ENCODE measurements at regions of chr7 and their contacts with region 1.

Region 1: DNA sequence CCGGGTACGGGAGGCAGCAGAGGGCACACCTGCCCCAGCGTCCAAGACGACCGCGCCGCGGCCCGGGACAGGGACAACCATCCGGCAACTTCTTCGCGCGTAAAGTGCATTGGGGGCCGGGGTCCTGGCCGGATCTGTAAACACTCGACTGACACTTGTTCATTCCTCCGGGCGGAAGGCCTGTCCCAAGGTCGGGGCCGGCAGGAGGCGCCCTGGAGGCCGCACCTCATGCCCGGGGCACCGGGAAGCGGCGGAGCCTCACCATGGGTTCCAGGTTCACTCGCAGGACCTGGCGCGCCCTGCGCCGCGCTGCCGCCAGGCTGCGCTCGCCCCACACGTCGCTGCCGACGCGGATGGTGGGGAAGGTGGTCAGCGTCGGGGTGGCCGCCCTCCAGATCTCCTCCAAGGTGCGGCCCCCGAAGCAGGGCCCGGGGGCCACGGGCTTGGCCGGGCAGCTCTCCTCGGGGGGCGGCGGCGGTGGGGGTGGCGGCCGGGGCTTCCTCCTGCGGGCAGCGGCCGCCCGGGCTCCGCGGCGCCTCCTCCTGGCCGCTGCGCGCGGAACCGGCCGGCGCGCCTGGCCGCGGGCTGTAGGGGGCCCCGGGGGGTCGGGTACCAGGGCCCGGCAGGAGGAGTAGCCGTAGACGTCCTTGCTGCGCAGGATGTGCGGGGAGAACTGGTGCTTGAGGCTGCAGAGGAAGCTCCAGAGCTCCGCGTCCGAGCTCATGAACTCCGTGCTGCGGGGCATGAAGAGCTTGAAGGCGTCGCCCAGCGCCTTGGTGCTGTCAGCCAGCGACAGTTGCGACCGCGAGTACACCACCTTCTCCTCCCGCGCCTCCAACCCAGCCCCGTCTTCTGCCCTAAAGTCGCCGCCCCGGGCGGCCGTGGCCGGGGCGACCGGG is 746 bp downstream of the CCDC71L start:
- DNase-seq: peak; percentile 92
- ATAC-seq: peak; percentile 72
- H3K4me3 Mint-ChIP-seq: peak overlapping the region; percentile 86
- H3K27ac Mint-ChIP-seq: peak overlapping the region; percentile 94
- H3K4me1 Mint-ChIP-seq: peaks cover 31% of the 10 kb centered on the region
- H3K27me3 Mint-ChIP-seq: no peaks in the 10 kb centered on the region

Region 2: DNA sequence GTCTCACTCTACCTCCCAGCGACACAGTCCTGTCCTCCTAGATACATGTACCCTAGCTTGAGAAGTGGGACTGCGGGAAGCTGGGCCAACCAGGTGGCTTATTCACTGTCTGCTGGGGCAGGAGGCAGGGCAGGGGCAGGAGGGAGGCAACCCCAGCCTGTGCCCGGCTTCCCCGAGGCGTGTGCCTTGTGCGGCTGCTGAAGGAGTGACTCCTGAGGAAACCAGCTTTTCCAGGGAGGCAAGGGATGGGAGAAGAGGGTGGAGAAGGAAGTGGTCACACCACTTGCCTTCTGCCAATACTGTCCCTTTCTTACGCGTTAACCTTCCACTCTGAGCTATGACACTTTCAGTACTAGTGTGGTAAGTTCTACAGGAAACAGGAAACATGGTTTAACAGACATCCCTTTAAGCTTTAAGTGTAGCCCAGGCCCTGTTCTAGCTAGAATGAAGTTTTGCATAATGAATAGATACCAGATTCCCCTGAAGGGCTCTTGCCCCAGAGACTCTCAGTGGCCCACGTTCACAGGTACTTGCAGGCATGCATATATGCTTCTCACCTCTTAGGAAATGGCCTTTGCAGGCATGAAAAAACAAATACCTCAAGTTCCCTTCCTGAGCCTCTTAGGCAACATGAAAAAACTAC is 588.7 kb before region 1 on chr7:
- CTCF ChIA-PET with region 1: no interaction called
- POLR2A ChIA-PET with region 1: no interaction called
- intact Hi-C with region 1: no loop called
- DNase-seq: peak; percentile 71
- ATAC-seq: peak; percentile 98
- H3K4me3 Mint-ChIP-seq: peak overlapping the region; percentile 60
- H3K27ac Mint-ChIP-seq: peak overlapping the region; percentile 95
- H3K4me1 Mint-ChIP-seq: peaks cover 35% of the 10 kb centered on the region
- H3K27me3 Mint-ChIP-seq: no peaks in the 10 kb centered on the region

Region 3: DNA sequence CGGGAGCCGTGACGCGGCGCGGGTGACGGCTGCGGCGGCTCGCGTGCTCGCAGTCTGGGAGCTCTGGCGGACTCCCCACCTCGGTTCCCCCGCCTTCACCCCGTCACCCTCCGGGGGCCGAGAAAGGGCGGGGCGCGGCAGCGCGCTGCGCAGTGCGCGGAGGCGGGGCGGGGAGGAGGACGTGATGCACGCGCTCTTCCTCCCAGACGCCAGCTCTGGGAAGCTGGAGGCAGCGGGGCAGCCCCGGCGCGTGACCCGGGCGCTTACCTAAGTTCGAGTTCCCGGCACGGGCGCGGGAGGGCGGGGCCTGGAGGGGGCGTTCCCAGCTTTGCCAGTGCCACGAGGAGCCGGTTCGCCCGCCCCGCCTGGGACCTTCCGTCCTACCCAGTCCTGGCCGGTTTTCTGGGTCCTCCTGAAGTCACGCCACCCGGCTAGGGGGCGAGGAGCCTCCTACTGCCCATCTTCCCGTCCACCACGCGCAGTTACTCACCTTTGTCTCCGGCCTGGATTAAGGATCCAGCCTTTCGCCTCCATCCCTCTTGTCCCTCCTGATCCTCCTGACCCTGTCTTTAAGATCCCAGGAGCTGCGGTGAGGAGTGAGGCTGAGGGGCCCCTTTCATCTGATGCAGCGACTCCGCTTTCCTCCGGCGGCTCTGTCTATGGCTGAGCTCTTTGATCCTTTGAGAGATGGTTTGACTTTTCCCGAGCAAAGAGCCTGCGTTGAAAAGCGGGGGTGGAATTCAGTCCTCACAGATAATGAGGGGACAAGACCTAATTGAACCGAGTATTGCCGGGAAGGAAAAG is 375.0 kb before region 1 on chr7:
- CTCF ChIA-PET with region 1: no interaction called
- POLR2A ChIA-PET with region 1: interaction called, 3 read pairs
- intact Hi-C with region 1: loop called (anchors 2 kb)
- DNase-seq: peak; percentile 100
- ATAC-seq: peak; percentile 80
- H3K4me3 Mint-ChIP-seq: peak overlapping the region; percentile 94
- H3K27ac Mint-ChIP-seq: peak overlapping the region; percentile 99
- H3K4me1 Mint-ChIP-seq: peaks cover 45% of the 10 kb centered on the region
- H3K27me3 Mint-ChIP-seq: no peaks in the 10 kb centered on the region

Region 4: GRCh38 chr7:106313456-106313901 is 346.7 kb before region 1 on chr7:
- CTCF ChIA-PET with region 1: no interaction called
- POLR2A ChIA-PET with region 1: no interaction called
- intact Hi-C with region 1: no loop called
- DNase-seq: no peak
- ATAC-seq: no peak
- H3K4me3 Mint-ChIP-seq: no peak overlapping the region
- H3K27ac Mint-ChIP-seq: no peak overlapping the region
- H3K4me1 Mint-ChIP-seq: peaks cover 28% of the 10 kb centered on the region
- H3K27me3 Mint-ChIP-seq: peaks cover 29% of the 10 kb centered on the region

Region 5: DNA sequence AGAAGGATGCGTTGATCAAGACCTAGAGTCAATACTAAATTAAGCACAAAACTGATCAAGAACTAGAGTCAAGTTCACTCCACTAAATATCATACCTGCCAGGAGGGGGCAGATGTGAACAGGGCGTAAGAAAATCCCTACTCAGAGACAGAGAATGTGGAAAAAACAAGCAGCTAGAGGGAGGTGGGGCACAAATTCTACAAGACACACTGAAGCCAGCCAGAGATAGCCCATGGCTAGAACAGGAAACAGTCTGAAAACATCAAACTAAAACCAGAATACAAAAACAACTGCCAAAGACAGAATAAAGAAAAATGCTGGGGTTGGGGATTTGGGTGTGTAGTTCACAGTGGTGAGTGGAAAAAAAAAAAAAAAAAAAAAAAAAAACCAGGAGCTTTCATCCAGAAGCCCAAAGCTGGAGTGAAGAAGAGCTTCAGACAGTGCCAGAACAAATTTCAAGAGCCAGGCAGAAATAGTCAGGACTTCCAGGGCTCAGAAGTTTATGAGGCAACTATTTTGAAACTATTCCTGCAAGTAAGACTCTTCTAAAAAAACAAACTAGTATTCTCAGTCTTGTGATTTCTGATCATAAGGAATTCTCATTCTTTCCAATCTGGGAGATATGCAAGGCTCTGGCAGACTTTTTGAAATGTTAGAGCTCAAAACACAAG is 117.5 kb before region 1 on chr7:
- CTCF ChIA-PET with region 1: interaction called, 14 read pairs
- POLR2A ChIA-PET with region 1: no interaction called
- intact Hi-C with region 1: loop called (anchors 1 kb)
- DNase-seq: peak; percentile 70
- ATAC-seq: peak; percentile 91
- H3K4me3 Mint-ChIP-seq: no peak overlapping the region
- H3K27ac Mint-ChIP-seq: peak overlapping the region; percentile 4
- H3K4me1 Mint-ChIP-seq: peaks cover 8% of the 10 kb centered on the region
- H3K27me3 Mint-ChIP-seq: peaks cover 3% of the 10 kb centered on the region

Region 6: GRCh38 chr7:106731187-106731586 is 71.0 kb after region 1 on chr7:
- CTCF ChIA-PET with region 1: interaction called, 92 read pairs
- POLR2A ChIA-PET with region 1: no interaction called
- intact Hi-C with region 1: loop called (anchors 1 kb)
- DNase-seq: no peak
- ATAC-seq: no peak
- H3K4me3 Mint-ChIP-seq: no peak overlapping the region
- H3K27ac Mint-ChIP-seq: no peak overlapping the region
- H3K4me1 Mint-ChIP-seq: peaks cover 47% of the 10 kb centered on the region
- H3K27me3 Mint-ChIP-seq: no peaks in the 10 kb centered on the region

Region 7: DNA sequence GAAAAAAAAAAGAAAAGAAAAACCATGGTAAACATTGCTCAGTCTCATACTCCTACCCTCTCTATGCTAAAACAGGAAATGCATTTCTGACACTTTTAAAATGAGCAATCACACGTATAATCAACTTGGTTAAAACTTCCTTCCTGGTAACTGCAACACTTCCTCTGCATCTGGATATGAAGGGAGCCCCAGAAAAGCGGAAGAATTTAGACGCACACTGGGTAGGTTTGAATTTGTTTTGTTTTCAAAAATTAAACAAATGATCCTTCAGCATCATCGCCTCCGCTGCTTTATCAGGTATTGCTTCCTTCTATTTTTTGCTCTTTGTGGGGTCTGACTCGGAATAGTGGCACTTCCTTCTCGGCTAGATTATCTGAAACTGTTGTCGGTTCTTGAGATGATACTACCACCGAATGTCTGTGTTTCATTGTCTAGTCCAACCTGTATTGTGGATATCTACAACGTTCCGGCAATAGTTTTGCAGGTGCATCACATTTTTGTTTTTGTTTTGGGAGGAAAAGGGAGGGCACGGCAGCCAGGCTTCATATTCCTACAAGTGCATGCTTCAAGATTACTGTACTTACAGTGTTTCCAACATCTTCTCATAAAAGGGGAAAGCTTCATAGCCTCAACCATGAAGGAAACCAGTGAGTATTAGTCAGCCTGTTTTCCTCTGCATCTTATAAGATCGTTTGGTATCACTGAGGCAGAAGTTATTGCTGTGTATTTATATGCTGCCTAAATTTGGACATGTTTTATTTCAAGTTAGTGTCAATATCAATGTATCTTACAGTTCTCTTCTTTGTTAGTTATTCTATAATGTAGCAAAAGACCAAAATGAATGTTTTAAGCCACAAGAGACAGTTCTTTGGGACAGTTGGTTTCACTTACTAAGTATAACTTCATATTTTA is 205.2 kb after region 1 on chr7 and contains the start of gene PIK3CG:
- CTCF ChIA-PET with region 1: interaction called, 3 read pairs
- POLR2A ChIA-PET with region 1: no interaction called
- intact Hi-C with region 1: loop called (anchors 5 to 10 kb)
- DNase-seq: no peak
- ATAC-seq: peak; percentile 79
- H3K4me3 Mint-ChIP-seq: peak within 1 kb of the TSS; percentile 83
- H3K27ac Mint-ChIP-seq: peak within 1 kb of the TSS; percentile 92
- H3K4me1 Mint-ChIP-seq: peaks cover 75% of the 10 kb centered on the region
- H3K27me3 Mint-ChIP-seq: no peaks in the 10 kb centered on the region
- total RNA-seq, gene PIK3CG: 9.9 to 14.3 TPM

Region 8: DNA sequence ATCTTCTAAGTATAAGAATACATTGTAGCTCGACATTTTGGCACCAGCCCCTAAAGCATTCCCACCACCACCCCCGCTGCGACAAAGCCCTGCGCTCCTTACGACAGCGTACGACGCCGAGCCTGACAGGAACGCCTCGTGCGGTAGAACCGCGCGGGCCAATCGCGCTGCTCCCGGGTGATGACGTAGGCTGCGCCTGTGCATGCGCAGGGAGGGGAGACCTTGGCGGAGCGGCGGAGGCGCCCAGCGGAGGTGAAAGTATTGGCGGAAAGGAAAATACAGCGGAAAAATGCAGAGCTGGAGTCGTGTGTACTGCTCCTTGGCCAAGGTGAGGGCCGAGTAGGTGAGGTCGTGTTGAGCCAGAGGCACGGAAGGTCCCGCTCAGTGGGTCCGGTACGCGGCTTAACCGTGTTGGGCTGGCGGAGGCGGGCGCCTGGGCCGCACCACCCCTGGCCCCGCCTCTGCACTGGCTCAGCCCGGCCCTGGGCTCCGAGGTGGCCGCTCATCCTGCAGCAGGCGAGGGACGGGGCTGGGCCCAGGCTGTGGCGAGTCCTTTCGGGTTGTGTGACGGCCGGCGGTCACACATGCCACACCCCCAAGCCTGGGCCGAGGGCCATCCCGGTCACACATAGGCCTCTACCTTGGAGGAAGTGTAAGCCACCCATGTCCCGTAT is 1230.9 kb after region 1 on chr7 and contains the start of gene DLD:
- CTCF ChIA-PET with region 1: no interaction called
- POLR2A ChIA-PET with region 1: no interaction called
- intact Hi-C with region 1: loop called in 1 of 2 experiments (anchors 2 kb)
- DNase-seq: peak; percentile 97
- ATAC-seq: peak; percentile 98
- H3K4me3 Mint-ChIP-seq: peak within 1 kb of the TSS; percentile 79
- H3K27ac Mint-ChIP-seq: peak within 1 kb of the TSS; percentile 92
- H3K4me1 Mint-ChIP-seq: peaks cover 40% of the 10 kb centered on the region
- H3K27me3 Mint-ChIP-seq: no peaks in the 10 kb centered on the region
- total RNA-seq, gene DLD: 71.4 to 101 TPM

Measured in activated CD4-positive, alpha-beta T cell treated with anti-CD3 and anti-CD28 coated beads for 36 hours (primary cell).